Activated CD8-positive, alpha-beta T cell treated with anti-CD3 and anti-CD28 coated beads, Interleukin-2, amount 10 ng/mL, durations not matched to agents 7 days and 5 days (primary cell): ENCODE measurements at regions of chr10 and their contacts with region 1.

Region 1: DNA sequence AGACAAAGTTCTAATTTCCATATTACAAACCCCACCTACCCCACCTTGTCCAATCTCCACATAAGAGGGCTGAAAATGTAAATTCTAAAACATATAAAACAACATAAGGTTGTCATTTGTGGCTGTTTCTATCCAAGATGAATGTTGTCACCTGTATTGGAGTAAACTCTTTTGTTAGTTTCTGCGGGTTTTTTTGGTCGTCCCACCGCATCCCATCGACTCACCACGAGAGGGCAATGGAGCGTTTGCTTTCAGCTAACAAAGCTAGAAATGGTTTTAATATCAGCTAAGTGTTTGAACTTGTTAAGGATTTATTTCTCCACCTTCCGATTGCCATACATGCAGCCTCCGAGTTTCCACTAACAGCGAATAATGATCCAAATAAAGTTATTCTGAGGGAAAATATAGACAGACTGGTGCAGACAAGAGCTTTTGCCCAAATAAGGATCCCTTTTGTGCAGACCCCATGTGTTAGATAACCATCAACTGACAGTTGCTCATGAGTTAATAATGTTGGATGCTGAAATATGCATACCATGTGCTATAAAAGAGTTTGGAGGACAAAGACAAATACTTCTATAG is 137.2 kb downstream of the ARID5B start:
- DNase-seq: peak; percentile 88
- ATAC-seq: peak; percentile 78
- H3K4me3 Mint-ChIP-seq: peak overlapping the region; percentile 11
- H3K27ac Mint-ChIP-seq: peak overlapping the region; percentile 71
- H3K4me1 Mint-ChIP-seq: peaks cover 62% of the 10 kb centered on the region
- H3K27me3 Mint-ChIP-seq: no peaks in the 10 kb centered on the region

Region 2: GRCh38 chr10:61896854-61897661 is 141.6 kb before region 1 on chr10:
- CTCF ChIA-PET with region 1: interaction called, 57 read pairs
- POLR2A ChIA-PET with region 1: interaction called, 41 read pairs
- DNase-seq: peak; percentile 82
- ATAC-seq: peak; percentile 72
- H3K4me3 Mint-ChIP-seq: peak overlapping the region; percentile 71
- H3K27ac Mint-ChIP-seq: peak overlapping the region; percentile 88
- H3K4me1 Mint-ChIP-seq: peaks cover 34% of the 10 kb centered on the region
- H3K27me3 Mint-ChIP-seq: no peaks in the 10 kb centered on the region

Region 3: DNA sequence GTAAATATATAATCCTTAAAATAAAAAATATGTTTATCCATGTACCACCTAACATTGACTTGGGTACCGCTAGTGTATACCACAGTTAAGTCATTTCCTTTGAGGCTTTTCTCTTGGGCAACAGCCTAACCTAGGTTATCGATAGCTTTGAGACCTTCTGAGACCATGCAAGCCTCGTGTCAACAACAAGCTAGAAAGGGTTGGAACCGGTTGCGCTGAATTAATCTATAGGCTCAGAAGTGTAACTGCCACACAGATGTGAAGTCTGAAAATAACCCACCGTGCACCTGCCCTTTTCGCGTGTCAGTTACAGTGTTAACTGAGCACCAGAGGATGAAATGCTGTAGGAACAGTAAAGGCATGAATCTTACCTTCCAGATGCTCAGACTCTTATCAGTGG is 77.4 kb before region 1 on chr10:
- CTCF ChIA-PET with region 1: interaction called, 14 read pairs
- POLR2A ChIA-PET with region 1: no interaction called
- DNase-seq: peak; percentile 59
- ATAC-seq: peak; percentile 89
- H3K4me3 Mint-ChIP-seq: peak overlapping the region; percentile 42
- H3K27ac Mint-ChIP-seq: peak overlapping the region; percentile 82
- H3K4me1 Mint-ChIP-seq: peaks cover 68% of the 10 kb centered on the region
- H3K27me3 Mint-ChIP-seq: no peaks in the 10 kb centered on the region

Region 4: GRCh38 chr10:62050893-62051433 is 12.3 kb after region 1 on chr10:
- CTCF ChIA-PET with region 1: interaction called, 83 read pairs
- POLR2A ChIA-PET with region 1: interaction called, 29 read pairs
- DNase-seq: peak; percentile 75
- ATAC-seq: peak; percentile 47
- H3K4me3 Mint-ChIP-seq: peak overlapping the region; percentile 77
- H3K27ac Mint-ChIP-seq: peak overlapping the region; percentile 95
- H3K4me1 Mint-ChIP-seq: peaks cover 99% of the 10 kb centered on the region
- H3K27me3 Mint-ChIP-seq: no peaks in the 10 kb centered on the region

Region 5: GRCh38 chr10:62199584-62199983 is 160.9 kb after region 1 on chr10:
- CTCF ChIA-PET with region 1: interaction called, 12 read pairs
- POLR2A ChIA-PET with region 1: no interaction called
- DNase-seq: no peak
- ATAC-seq: peak; percentile 98
- H3K4me3 Mint-ChIP-seq: no peak overlapping the region
- H3K27ac Mint-ChIP-seq: peak overlapping the region; percentile 37
- H3K4me1 Mint-ChIP-seq: peaks cover 28% of the 10 kb centered on the region
- H3K27me3 Mint-ChIP-seq: no peaks in the 10 kb centered on the region

Region 6: DNA sequence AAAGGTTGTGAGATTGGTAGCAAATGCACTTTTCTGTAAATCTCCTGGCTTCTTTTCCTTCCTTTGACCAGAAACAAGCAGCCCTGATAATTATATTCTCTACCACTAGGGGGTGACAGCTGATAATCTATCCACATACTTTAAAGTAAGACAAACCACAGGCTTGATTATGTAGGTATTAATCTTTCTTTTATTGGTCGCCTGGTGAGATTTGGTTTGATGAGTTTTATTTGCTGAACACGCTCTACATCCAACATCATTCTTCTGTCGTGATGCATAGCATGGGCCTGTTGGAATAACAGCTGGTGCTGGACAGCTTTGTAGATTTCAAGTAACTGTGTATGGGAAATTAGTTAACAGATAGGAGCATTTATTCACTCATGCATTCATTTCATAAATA is 399.0 kb after region 1 on chr10:
- CTCF ChIA-PET with region 1: interaction called, 11 read pairs
- POLR2A ChIA-PET with region 1: no interaction called
- DNase-seq: peak; percentile 37
- ATAC-seq: peak; percentile 71
- H3K4me3 Mint-ChIP-seq: no peak overlapping the region
- H3K27ac Mint-ChIP-seq: no peak overlapping the region
- H3K4me1 Mint-ChIP-seq: peaks cover 8% of the 10 kb centered on the region
- H3K27me3 Mint-ChIP-seq: peaks cover 13% of the 10 kb centered on the region